AG04450 (cell line): ENCODE measurements at regions of chr14 and their contacts with region 1.

Region 1: DNA sequence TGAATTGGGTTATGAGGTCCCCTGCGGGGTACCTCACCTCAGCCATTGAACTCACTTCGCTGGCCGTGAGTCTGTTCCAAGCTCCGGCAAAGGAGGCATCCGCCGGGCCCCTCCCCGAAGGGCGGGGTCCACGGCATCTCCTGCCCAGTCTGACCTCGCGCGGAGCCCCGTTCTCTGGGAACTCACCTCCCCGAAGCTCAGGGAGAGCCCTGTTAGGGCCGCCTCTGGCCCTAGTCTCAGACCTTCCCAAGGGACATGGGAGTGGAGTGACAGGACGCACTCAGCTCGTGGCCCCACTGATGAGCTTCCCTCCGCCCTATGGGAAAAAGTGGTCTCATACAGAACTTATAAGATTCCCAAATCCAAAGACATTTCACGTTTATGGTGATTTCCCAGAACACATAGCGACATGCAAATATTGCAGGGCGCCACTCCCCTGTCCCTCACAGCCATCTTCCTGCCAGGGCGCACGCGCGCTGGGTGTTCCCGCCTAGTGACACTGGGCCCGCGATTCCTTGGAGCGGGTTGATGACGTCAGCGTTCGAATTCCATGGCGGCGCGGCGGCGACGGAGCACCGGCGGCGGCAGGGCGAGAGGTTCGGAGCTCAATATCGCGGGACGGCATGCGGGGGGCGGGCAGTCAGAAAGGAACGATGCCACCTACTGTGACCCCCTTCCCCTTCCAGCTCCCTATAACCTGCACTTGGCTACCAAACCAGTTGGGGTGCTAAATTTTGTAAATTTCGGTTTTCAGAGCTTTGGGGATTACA is at the start of gene PARP2:
- DNase-seq: peak; percentile 99
- H3K4me3 ChIP-seq: peak within 1 kb of the TSS; percentile 98
- H3K27ac ChIP-seq: peak within 1 kb of the TSS; percentile 87
- H3K27me3 ChIP-seq: no peaks in the 10 kb centered on the region
- CTCF ChIP-seq: no peak
- polyA plus RNA-seq, gene PARP2: 11.8 and 12.3 TPM in 2 replicates

Region 2: DNA sequence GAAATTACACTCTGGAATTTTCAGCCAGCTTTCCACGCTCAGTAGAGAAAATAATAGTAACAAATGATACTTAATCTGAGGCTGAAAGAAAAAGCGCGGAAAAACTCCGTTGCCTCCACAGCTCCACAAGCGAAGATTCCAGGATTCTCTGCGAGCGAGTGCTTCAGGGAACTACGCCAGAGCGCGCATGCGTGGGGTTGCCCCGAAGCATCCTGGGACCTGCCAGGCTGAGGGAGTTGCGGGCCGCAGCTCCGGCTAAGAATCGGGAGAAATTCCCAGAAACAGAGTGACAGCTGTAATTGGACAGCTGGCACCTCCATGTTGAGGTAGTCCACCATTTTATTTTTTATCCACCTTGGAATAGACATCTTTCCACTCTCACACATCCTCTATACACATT is 25.6 kb before region 1 on chr14:
- CTCF ChIA-PET with region 1: no interaction called
- POLR2A ChIA-PET with region 1: interaction called, 19 read pairs
- DNase-seq: no peak
- H3K4me3 ChIP-seq: no peak overlapping the region
- H3K27ac ChIP-seq: no peak overlapping the region
- H3K27me3 ChIP-seq: no peaks in the 10 kb centered on the region
- CTCF ChIP-seq: no peak

Region 3: DNA sequence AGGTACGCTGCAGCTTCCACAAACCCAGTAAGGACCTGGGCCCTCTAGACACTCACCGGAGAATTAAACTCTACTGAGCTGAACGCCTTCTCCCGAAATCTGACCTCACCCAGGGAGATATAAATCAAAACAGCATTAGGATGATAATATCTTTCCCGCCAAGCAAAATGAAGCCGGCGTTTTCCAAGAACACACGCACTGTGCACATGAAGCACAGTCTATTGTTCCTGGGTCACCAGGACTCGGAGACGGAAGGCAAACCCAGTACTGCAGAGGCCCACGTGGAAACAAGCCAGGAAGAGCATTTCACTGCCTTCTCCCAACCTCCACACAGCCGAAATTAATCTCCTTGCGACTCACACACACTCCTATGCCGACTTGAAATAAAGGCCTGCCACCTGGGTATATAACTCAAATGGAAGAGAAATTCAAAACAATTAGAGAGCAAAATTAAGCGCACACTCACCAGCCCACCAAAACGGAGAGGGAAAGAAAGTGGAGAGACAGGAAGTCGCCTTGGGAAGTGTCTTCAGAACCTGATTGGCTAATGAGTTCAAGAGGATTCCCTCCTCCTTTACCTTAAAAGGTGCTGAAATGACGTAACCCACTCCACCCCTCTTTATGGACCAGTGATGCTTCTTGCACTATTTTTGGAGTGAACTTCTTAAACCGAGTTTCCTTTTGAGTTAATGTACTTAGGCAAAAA is 10.3 kb before region 1 on chr14 and contains the start of gene CCNB1IP1:
- CTCF ChIA-PET with region 1: interaction called, 158 read pairs
- POLR2A ChIA-PET with region 1: interaction called, 14 read pairs
- DNase-seq: peak; percentile 48
- H3K4me3 ChIP-seq: peak within 1 kb of the TSS; percentile 82
- H3K27ac ChIP-seq: peak within 1 kb of the TSS; percentile 59
- H3K27me3 ChIP-seq: no peaks in the 10 kb centered on the region
- CTCF ChIP-seq: no peak
- polyA plus RNA-seq, gene CCNB1IP1: 54.2 and 69.2 TPM in 2 replicates

Region 4: GRCh38 chr14:20454516-20455354 is 111.5 kb after region 1 on chr14 and contains the starts of genes APEX1 and OSGEP:
- CTCF ChIA-PET with region 1: interaction called, 3 read pairs
- POLR2A ChIA-PET with region 1: interaction called, 15 read pairs
- DNase-seq: peak; percentile 98
- H3K4me3 ChIP-seq: peak within 1 kb of the TSS; percentile 91
- H3K27ac ChIP-seq: peak within 1 kb of the TSS; percentile 99
- H3K27me3 ChIP-seq: no peaks in the 10 kb centered on the region
- CTCF ChIP-seq: no peak
- polyA plus RNA-seq, gene APEX1: 240 and 274 TPM in 2 replicates
- polyA plus RNA-seq, gene OSGEP: 23.6 and 29.2 TPM in 2 replicates

Region 5: GRCh38 chr14:20516906-20517305 is 173.6 kb after region 1 on chr14:
- CTCF ChIA-PET with region 1: no interaction called
- POLR2A ChIA-PET with region 1: interaction called, 10 read pairs
- DNase-seq: peak; percentile 54
- H3K4me3 ChIP-seq: no peak overlapping the region
- H3K27ac ChIP-seq: peak overlapping the region; percentile 96
- H3K27me3 ChIP-seq: no peaks in the 10 kb centered on the region
- CTCF ChIP-seq: no peak

Region 6: GRCh38 chr14:20682435-20683124 is 339.3 kb after region 1 on chr14:
- CTCF ChIA-PET with region 1: no interaction called
- POLR2A ChIA-PET with region 1: interaction called, 30 read pairs
- DNase-seq: no peak
- H3K4me3 ChIP-seq: peak overlapping the region; percentile 86
- H3K27ac ChIP-seq: peak overlapping the region; percentile 99
- H3K27me3 ChIP-seq: no peaks in the 10 kb centered on the region
- CTCF ChIP-seq: 0 out of 2 replicates have a peak, but pooled peaks have one; percentile 14

Region 7: GRCh38 chr14:21257394-21257909 is 914.2 kb after region 1 on chr14:
- CTCF ChIA-PET with region 1: no interaction called
- POLR2A ChIA-PET with region 1: no interaction called
- DNase-seq: no peak
- H3K4me3 ChIP-seq: no peak overlapping the region
- H3K27ac ChIP-seq: peak overlapping the region; percentile 24
- H3K27me3 ChIP-seq: no peaks in the 10 kb centered on the region
- CTCF ChIP-seq: no peak